Activated CD8-positive, alpha-beta T cell treated with anti-CD3 and anti-CD28 coated beads, Interleukin-2, amount 10 ng/mL, durations not matched to agents 7 days and 5 days (primary cell): ENCODE measurements at regions of chr17 and their contacts with region 1.

Region 1: DNA sequence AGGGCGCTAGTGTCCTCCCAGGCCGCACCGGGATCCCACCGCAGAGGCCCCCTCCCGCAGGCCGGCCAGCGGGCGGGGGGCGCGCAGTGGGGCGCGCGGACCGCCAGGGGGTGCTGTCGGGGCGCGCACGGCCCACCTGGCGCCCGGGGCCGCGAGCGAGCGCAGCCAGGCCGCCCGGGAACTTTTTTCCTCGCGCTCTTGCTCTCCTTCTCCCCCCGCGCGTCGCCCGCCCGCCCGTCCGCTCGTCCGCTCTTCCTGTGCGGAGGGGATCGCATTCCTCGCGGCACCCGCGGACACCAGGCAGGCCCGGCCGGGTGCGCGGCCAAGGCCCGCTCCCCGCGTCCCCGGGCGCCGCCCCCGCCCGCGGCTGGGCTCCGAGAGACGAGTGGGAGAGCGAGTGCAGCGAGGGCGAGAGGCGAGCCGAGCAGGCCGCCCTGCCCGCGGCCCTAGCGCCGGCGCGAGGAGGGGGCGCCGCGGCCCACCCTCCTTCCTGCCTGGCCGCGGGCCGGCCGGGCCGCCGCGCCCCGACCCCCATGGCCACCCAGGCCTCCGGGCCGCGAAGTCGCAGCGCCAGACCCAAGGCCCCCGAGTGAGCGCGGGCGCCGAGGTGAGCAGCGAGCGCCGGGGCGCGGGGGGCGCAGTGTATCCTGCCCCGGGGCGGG is at the start of gene RAI1:
- DNase-seq: peak; percentile 76
- ATAC-seq: peak; percentile 69
- H3K4me3 Mint-ChIP-seq: peak within 1 kb of the TSS; percentile 87
- H3K27ac Mint-ChIP-seq: peak within 1 kb of the TSS; percentile 92
- H3K4me1 Mint-ChIP-seq: peaks cover 48% of the 10 kb centered on the region
- H3K27me3 Mint-ChIP-seq: peaks cover 8% of the 10 kb centered on the region
- total RNA-seq, gene RAI1: 24.4 to 24.6 TPM

Region 2: GRCh38 chr17:17694169-17695081 is 13.1 kb after region 1 on chr17:
- CTCF ChIA-PET with region 1: interaction called, 21 read pairs
- POLR2A ChIA-PET with region 1: interaction called, 38 read pairs
- DNase-seq: peak; percentile 76
- ATAC-seq: peak; percentile 68
- H3K4me3 Mint-ChIP-seq: peak overlapping the region; percentile 78
- H3K27ac Mint-ChIP-seq: peak overlapping the region; percentile 95
- H3K4me1 Mint-ChIP-seq: peaks cover 71% of the 10 kb centered on the region
- H3K27me3 Mint-ChIP-seq: no peaks in the 10 kb centered on the region

Region 3: DNA sequence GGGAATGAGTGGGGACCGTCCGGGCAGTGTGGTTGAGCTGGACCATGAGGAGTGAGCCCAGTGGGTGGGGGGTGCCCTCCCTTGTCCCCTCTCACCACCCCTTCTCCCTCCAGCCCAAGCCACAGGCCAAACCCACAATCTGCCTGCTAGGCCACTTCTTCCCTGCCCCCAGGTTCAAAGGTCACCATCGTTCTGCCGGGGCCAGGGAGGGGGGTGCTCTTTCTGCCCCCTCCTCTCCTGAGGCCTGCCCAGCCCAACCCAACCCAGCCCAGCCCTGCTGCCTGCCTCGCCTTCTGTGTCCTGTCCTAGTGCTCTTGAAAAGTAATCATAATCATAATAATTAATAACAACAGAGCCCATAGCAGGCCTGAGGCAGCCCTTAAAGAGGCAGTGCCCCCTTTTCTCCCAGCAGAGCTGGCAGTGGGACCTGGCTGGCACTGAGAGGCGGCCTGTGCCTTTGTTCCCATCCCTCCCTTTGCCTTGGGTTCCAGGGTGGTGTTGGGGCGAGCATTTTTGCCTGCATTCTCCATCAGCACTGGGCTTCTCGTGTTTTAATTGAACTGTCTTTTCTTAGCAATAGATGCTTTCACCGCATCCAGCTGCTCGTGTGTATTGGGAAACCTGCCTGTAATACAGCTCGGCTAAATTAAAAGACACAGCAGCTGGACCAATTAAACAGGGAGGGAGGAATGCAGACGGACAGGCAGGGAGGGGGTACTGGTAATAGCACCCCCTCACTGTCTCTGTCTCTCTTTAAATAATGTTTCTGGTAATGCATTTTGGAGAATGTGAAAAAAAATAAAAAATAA is 108.7 kb after region 1 on chr17:
- CTCF ChIA-PET with region 1: no interaction called
- POLR2A ChIA-PET with region 1: no interaction called
- DNase-seq: no peak
- ATAC-seq: no peak
- H3K4me3 Mint-ChIP-seq: no peak overlapping the region
- H3K27ac Mint-ChIP-seq: no peak overlapping the region
- H3K4me1 Mint-ChIP-seq: peaks cover 29% of the 10 kb centered on the region
- H3K27me3 Mint-ChIP-seq: no peaks in the 10 kb centered on the region